Activated CD4-positive, alpha-beta memory T cell treated with anti-CD3 and anti-CD28 coated beads for 36 hours (primary cell): ENCODE measurements at regions of chr1 and their contacts with region 1.

Region 1: GRCh38 chr1:6205849-6206519 is at the start of gene RNF207:
- DNase-seq: peak; percentile 80
- H3K4me3 Mint-ChIP-seq: peak within 1 kb of the TSS; percentile 75
- H3K27ac Mint-ChIP-seq: peak within 1 kb of the TSS; percentile 64
- H3K4me1 Mint-ChIP-seq: peaks cover 14% of the 10 kb centered on the region
- H3K27me3 Mint-ChIP-seq: peaks cover 13% of the 10 kb centered on the region
- total RNA-seq, gene RNF207: 14.7 to 18.4 TPM

Region 2: DNA sequence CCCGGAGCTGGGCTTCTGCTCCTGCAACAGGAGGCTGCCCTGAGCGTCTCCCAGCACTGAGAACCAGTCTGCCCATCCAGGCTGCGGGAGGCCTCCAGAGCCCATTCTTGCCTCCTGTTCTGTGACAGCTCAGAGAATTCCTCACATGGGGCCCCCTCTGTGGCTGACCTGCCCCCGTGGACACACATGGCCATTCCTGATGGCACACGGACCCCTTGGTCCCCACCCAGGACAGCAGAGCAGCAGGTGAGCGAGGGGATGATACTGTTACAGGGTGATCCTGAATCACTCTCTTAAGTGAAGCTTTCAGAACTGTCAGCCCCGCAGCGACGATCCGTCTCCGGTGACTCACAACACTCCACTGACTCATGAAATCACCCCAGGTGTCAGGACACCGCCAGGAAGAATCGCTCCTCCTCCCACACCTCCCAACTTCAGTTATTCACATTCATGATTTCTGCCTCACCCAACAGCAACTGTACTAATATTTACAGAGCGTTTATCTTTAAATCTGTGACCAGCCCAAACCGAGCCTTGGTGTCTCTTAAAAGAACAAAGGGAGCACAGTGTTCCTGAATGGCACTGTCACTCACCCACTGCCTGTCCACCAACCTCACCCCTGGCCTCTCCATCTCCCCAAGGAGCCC is 48.3 kb before region 1 on chr1:
- CTCF ChIA-PET with region 1: no interaction called
- POLR2A ChIA-PET with region 1: no interaction called
- intact Hi-C with region 1: no loop called
- DNase-seq: peak; percentile 71
- H3K4me3 Mint-ChIP-seq: no peak overlapping the region
- H3K27ac Mint-ChIP-seq: no peak overlapping the region
- H3K4me1 Mint-ChIP-seq: peaks cover 8% of the 10 kb centered on the region
- H3K27me3 Mint-ChIP-seq: peaks cover 20% of the 10 kb centered on the region

Region 3: GRCh38 chr1:6191968-6192367 is 14.0 kb before region 1 on chr1:
- CTCF ChIA-PET with region 1: interaction called, 16 read pairs
- POLR2A ChIA-PET with region 1: no interaction called
- intact Hi-C with region 1: no loop called
- DNase-seq: no peak
- H3K4me3 Mint-ChIP-seq: no peak overlapping the region
- H3K27ac Mint-ChIP-seq: no peak overlapping the region
- H3K4me1 Mint-ChIP-seq: peaks cover 20% of the 10 kb centered on the region
- H3K27me3 Mint-ChIP-seq: no peaks in the 10 kb centered on the region

Region 4: GRCh38 chr1:6235296-6235677 is 29.3 kb after region 1 on chr1:
- CTCF ChIA-PET with region 1: interaction called, 9 read pairs
- POLR2A ChIA-PET with region 1: interaction called, 16 read pairs
- intact Hi-C with region 1: no loop called
- DNase-seq: peak; percentile 34
- H3K4me3 Mint-ChIP-seq: peak overlapping the region; percentile 89
- H3K27ac Mint-ChIP-seq: peak overlapping the region; percentile 71
- H3K4me1 Mint-ChIP-seq: peaks cover 19% of the 10 kb centered on the region
- H3K27me3 Mint-ChIP-seq: peaks cover 10% of the 10 kb centered on the region

Region 5: GRCh38 chr1:6342056-6342455 is 136.1 kb after region 1 on chr1:
- CTCF ChIA-PET with region 1: no interaction called
- POLR2A ChIA-PET with region 1: no interaction called
- intact Hi-C with region 1: no loop called
- DNase-seq: no peak
- H3K4me3 Mint-ChIP-seq: no peak overlapping the region
- H3K27ac Mint-ChIP-seq: no peak overlapping the region
- H3K4me1 Mint-ChIP-seq: no peaks in the 10 kb centered on the region
- H3K27me3 Mint-ChIP-seq: no peaks in the 10 kb centered on the region